AG04450 (cell line): ENCODE measurements at regions of chr18 and their contacts with region 1.

Region 1: DNA sequence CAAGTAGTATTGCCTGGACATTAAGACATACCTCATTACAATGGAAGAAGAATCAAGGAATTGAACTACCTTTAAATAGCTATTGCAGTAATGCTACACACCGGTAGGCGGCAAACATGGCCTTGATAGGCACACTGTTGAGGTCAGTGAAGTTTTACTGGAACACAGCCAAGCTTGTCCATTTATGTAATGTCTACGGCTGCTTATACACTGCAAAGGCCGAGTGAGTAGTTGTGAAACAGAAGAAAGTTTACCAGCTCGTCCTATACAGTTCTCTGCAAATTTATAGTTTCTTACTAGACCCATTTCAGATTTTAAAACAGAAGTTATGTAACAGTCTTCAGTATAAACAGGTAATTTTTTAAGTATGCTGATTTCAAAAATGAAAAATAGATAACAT is 38.8 kb downstream of the PPP4R1 start:
- DNase-seq: peak; percentile 96
- H3K4me3 ChIP-seq: no peak overlapping the region
- H3K27ac ChIP-seq: no peak overlapping the region
- H3K27me3 ChIP-seq: no peaks in the 10 kb centered on the region
- CTCF ChIP-seq: peak; percentile 92

Region 2: DNA sequence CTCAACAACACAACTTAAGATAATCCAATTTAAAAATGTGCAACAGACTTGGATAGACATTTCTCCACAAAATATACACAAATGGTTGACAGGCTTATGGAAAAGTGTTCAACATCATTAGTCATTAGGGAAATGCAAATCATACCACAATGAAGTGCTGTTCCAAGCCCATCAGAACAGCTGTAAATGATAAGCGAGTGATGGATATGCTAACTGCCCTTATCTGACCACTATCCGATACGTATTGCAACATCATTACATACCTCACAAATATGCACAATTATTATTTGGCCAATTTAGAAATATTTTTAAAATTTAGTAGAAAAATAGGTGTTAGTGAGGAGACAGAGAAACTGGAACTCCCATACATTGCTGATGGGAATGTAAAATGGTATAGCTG is 23.4 kb before region 1 on chr18:
- CTCF ChIA-PET with region 1: interaction called, 13 read pairs
- POLR2A ChIA-PET with region 1: no interaction called
- DNase-seq: no peak
- H3K4me3 ChIP-seq: no peak overlapping the region
- H3K27ac ChIP-seq: no peak overlapping the region
- H3K27me3 ChIP-seq: no peaks in the 10 kb centered on the region
- CTCF ChIP-seq: no peak

Region 3: DNA sequence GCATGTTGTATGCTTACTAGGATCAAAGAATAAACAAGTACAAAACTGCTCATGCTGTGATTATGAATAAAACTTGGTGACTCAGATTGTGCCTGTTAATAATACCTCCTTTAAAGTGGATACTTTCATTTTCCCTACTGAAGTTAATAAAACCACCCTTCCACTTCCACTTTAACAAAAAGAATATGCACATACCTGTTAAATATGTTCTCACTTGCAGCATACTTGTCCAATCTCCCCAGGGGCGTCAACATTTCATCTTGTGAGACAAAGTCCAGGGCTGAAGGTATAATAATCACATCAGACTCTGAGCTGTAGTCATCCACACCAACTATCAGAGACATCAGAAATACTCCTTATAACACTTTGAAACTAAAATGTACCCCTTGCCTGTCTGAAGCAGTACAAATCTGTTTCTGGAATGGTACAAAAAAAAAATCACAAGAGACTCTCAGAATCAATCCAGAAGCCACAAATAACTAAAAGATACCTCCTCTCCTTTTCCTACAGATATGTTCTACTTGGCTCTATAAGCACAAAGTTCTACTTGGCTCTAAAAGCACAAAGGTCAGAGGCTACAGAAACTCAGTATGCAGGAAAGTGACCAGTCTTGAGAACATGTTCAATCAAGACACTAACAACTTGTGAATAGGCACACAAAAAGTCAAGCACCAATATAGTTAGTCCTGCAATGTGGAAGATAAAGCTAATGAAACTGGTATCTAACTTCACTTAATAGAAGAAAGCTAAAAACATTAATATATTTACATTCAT is 19.5 kb after region 1 on chr18:
- CTCF ChIA-PET with region 1: interaction called, 11 read pairs
- POLR2A ChIA-PET with region 1: no interaction called
- DNase-seq: no peak
- H3K4me3 ChIP-seq: peak overlapping the region; percentile 7; the same call in 1 of the 2 replicates
- H3K27ac ChIP-seq: no peak overlapping the region
- H3K27me3 ChIP-seq: no peaks in the 10 kb centered on the region
- CTCF ChIP-seq: no peak

Region 4: DNA sequence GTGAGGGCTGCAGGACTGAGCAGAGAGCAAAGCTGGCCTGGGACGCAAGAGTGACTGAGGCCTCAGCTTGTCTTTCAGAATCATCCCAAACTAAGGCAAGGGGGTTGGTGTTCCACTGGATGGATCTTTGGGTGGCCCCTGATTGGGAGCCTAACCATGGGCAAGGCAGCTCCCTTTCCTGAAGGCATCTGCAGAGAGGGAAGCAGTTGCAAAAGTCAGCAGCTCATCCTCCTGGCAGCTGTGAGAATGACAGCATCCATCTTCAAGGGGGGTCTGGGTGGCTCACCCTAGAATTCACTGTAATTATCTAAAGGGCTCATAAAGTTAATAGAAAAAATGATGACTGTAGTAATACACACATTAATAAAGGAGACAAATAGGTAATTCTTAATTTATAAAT is 86.0 kb after region 1 on chr18:
- CTCF ChIA-PET with region 1: interaction called, 11 read pairs
- POLR2A ChIA-PET with region 1: no interaction called
- DNase-seq: no peak
- H3K4me3 ChIP-seq: no peak overlapping the region
- H3K27ac ChIP-seq: no peak overlapping the region
- H3K27me3 ChIP-seq: no peaks in the 10 kb centered on the region
- CTCF ChIP-seq: peak; percentile 44

Region 5: GRCh38 chr18:9683407-9684396 is 108.1 kb after region 1 on chr18:
- CTCF ChIA-PET with region 1: interaction called, 10 read pairs
- POLR2A ChIA-PET with region 1: no interaction called
- DNase-seq: no peak
- H3K4me3 ChIP-seq: no peak overlapping the region
- H3K27ac ChIP-seq: no peak overlapping the region
- H3K27me3 ChIP-seq: no peaks in the 10 kb centered on the region
- CTCF ChIP-seq: peak; percentile 57